PC-3 (cell line): ENCODE measurements at regions of chr1 and their contacts with region 1.

Region 1: GRCh38 chr1:25572708-25573600 is 29.5 kb downstream of the LDLRAP1 start:
- DNase-seq: peak; percentile 64
- ATAC-seq: peak; percentile 19; the same call in 1 of the 2 replicates
- H3K4me3 ChIP-seq: no peak overlapping the region
- H3K27ac ChIP-seq: no peak overlapping the region
- H3K4me1 ChIP-seq: peaks cover 31% of the 10 kb centered on the region
- H3K27me3 ChIP-seq: no peaks in the 10 kb centered on the region
- CTCF ChIP-seq: peak; percentile 66

Region 2: DNA sequence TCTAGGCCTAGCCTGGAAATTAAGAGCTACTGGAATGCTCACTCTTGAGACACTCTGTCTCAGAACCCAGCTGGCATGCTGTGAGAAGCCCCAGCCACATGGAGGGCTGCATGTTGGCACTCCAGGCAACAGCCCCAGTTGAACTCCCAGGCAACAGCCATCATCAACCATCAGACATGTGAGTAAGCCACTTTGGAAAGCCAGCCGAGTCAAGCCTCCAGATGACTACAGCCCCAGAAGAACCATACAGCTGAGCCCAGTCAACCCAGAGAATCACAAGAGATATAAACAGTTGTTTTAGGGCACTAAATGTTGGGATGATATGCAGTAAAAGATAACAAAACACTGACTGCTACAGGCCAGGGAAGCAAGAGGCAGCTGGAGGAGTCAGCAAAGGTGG is 25.9 kb after region 1 on chr1:
- CTCF ChIA-PET with region 1: no interaction called
- POLR2A ChIA-PET with region 1: interaction called, 15 read pairs
- intact Hi-C with region 1: no loop called
- DNase-seq: no peak
- ATAC-seq: no peak
- H3K4me3 ChIP-seq: no peak overlapping the region
- H3K27ac ChIP-seq: no peak overlapping the region
- H3K4me1 ChIP-seq: no peaks in the 10 kb centered on the region
- H3K27me3 ChIP-seq: no peaks in the 10 kb centered on the region
- CTCF ChIP-seq: no peak

Region 3: DNA sequence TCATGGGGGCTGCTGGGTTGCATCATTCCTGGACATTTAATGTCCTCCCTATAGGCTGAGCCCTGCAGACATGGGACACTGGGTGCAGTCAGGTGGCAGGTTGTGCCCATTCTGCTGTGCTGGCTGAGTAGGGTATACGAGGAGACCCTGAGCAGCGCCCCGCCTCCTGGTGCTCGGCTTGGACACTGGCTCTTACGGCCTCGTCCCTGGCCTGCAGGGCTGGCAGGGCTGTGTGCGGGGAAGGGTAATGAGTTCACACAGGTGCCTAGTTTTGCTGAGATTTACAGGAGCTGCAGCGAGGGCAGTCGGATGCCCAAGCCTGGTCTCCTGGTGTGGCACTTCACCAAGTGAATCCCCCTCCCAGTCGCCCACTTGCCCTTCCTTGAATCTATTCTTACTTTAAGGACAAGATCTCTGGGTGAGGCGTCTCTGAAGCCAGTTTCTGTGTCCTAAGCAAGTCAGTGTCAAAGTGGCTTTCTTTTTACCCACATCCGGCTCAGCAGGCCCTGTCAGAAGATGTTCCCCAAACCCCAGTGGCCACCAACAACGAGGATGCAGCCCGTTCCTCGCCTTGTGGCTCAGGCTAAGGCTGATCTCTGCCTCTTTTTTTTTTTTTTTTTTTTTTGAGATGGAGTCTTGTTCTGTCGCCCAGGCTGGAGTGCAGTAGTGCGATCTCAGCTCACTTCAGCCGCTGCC is 116.9 kb after region 1 on chr1:
- CTCF ChIA-PET with region 1: interaction called, 10 read pairs
- POLR2A ChIA-PET with region 1: no interaction called
- intact Hi-C with region 1: no loop called
- DNase-seq: no peak
- ATAC-seq: no peak
- H3K4me3 ChIP-seq: no peak overlapping the region
- H3K27ac ChIP-seq: no peak overlapping the region
- H3K4me1 ChIP-seq: no peaks in the 10 kb centered on the region
- H3K27me3 ChIP-seq: no peaks in the 10 kb centered on the region
- CTCF ChIP-seq: no peak